ENCODE measurements at regions of chr1 and their contacts with region 1.

Region 1: GRCh38 chr1:212284744-212285684 is at the start of gene PPP2R5A:
- DNase-seq: peak; percentile 100
- H3K4me3 Mint-ChIP-seq: peak within 1 kb of the TSS; percentile 94
- H3K27ac Mint-ChIP-seq: peak within 1 kb of the TSS; percentile 99
- H3K4me1 Mint-ChIP-seq: peaks cover 29% of the 10 kb centered on the region
- H3K27me3 Mint-ChIP-seq: no peaks in the 10 kb centered on the region
- CTCF ChIP-seq: peak; percentile 20
- total RNA-seq, gene PPP2R5A: 37.5 and 38.6 TPM in 2 replicates

Region 2: DNA sequence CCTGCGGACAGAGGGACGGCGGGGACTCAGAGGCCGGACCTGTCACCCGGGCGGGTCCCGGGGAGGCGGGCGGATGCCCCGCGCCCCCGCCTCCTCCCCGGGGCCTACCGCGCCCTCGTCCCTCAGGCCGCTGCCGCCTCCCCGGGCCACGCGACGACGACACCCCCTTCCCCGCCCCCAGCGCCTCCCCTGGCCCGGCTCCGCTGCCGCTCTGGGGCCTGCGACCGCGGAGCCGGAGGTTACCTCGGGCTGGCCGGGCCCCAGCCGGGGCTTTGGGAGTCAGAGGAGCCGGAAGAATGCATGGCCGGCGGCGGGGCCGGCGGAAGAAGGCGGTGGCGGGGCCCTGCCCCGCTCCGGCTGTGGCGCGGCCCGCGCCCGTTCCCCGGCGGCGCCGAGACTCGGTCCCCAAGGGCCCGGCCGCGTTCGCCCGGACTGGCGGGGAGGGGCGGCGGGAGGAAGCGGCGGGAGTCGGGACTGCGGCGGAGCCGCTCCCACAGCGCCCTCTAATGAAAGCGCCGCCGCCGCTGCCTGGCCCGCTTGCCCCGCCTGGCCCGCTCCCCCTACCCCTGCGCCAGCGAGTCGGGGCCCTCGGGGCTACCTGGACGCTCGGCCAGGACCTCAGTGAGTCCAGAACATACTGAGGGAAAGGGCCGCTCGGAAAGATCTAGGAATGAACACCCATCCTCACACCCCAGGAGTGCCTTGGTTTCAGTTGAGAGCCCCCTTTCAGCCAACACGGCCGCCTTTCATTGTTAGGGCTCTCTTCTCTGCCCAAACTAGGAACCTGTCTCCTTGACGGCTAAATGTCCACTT is 454.5 kb before region 1 on chr1 and contains the start of gene LPGAT1:
- CTCF ChIA-PET with region 1: no interaction called
- POLR2A ChIA-PET with region 1: no interaction called
- intact Hi-C with region 1: loop called (anchors 5 kb)
- DNase-seq: peak; percentile 87
- H3K4me3 Mint-ChIP-seq: peak within 1 kb of the TSS; percentile 95
- H3K27ac Mint-ChIP-seq: peak within 1 kb of the TSS; percentile 92
- H3K4me1 Mint-ChIP-seq: peaks cover 33% of the 10 kb centered on the region
- H3K27me3 Mint-ChIP-seq: no peaks in the 10 kb centered on the region
- CTCF ChIP-seq: peak; percentile 91
- total RNA-seq, gene LPGAT1: 76.2 and 82.4 TPM in 2 replicates

Region 3: DNA sequence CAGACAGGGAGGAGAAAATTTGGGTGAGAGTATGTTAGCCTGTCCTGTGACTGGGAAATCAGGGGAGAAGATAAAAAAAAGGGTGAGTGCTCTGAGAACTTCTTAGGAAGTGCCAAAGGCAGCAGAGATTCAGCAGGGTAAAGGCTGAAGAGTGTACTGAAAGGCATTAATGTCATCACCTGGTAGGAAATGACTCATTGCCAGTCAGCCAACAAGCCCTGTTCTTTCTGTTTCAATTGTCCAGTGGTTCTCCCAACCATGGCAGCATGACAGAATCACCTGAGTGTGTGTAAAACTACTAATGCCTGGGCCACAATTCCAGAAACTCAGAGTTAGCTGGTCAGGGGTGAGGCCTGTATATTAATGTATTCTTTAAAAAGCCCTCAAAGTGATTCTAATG is 333.2 kb before region 1 on chr1:
- CTCF ChIA-PET with region 1: no interaction called
- POLR2A ChIA-PET with region 1: no interaction called
- intact Hi-C with region 1: no loop called
- DNase-seq: peak; percentile 98
- H3K4me3 Mint-ChIP-seq: no peak overlapping the region
- H3K27ac Mint-ChIP-seq: no peak overlapping the region
- H3K4me1 Mint-ChIP-seq: peaks cover 17% of the 10 kb centered on the region
- H3K27me3 Mint-ChIP-seq: no peaks in the 10 kb centered on the region
- CTCF ChIP-seq: no peak

Region 4: DNA sequence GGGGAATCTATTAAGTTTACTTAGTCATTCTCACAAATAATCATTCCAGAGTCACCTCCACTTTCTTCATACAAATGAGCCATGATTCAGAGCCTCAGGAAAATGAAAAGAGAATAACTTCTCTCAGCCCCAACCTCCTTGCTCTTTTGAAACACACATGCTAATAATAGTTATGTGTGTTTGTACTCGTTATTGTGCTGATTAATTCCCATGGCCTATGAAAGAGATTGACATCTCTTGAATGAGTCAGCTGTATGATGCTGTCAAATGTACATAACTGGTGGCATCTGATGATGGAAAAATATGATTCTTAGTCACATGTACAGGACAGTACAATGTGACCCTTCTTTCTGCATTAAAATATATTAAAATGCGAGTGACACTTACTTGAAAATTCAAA is 208.0 kb before region 1 on chr1:
- CTCF ChIA-PET with region 1: interaction called, 278 read pairs
- POLR2A ChIA-PET with region 1: interaction called, 74 read pairs
- intact Hi-C with region 1: no loop called
- DNase-seq: peak; percentile 51
- H3K4me3 Mint-ChIP-seq: no peak overlapping the region
- H3K27ac Mint-ChIP-seq: peak overlapping the region; percentile 41
- H3K4me1 Mint-ChIP-seq: peaks cover 13% of the 10 kb centered on the region
- H3K27me3 Mint-ChIP-seq: no peaks in the 10 kb centered on the region
- CTCF ChIP-seq: no peak

Region 5: DNA sequence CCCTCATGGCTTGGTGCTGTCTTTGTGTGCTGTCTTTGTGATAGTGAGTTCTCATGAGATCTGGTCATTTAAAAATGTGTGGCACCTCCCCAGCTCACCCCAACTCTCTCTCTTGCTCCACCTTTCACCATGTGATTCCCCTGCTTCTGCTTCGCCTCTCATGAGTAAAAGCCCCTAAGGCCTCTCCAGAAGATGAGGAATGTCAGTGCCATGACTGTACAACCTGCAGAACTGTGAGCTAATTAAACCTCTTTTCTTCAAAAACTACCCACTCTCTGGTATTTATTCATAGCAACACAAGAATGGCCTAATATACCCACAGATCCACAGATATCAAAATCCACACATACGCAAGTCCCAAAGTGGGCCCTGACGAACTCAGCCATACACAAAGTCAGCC is 88.7 kb before region 1 on chr1:
- CTCF ChIA-PET with region 1: no interaction called
- POLR2A ChIA-PET with region 1: no interaction called
- intact Hi-C with region 1: no loop called
- DNase-seq: no peak
- H3K4me3 Mint-ChIP-seq: no peak overlapping the region
- H3K27ac Mint-ChIP-seq: no peak overlapping the region
- H3K4me1 Mint-ChIP-seq: no peaks in the 10 kb centered on the region
- H3K27me3 Mint-ChIP-seq: no peaks in the 10 kb centered on the region
- CTCF ChIP-seq: no peak

Region 6: GRCh38 chr1:212234431-212235395 is 50.3 kb before region 1 on chr1:
- CTCF ChIA-PET with region 1: interaction called, 6 read pairs
- POLR2A ChIA-PET with region 1: interaction called, 17 read pairs
- intact Hi-C with region 1: loop called (anchors 2 kb)
- DNase-seq: peak; percentile 99
- H3K4me3 Mint-ChIP-seq: no peak overlapping the region
- H3K27ac Mint-ChIP-seq: peak overlapping the region; percentile 44
- H3K4me1 Mint-ChIP-seq: peaks cover 19% of the 10 kb centered on the region
- H3K27me3 Mint-ChIP-seq: no peaks in the 10 kb centered on the region
- CTCF ChIP-seq: no peak

Region 7: GRCh38 chr1:212302745-212303383 is 17.9 kb after region 1 on chr1:
- CTCF ChIA-PET with region 1: interaction called, 3 read pairs
- POLR2A ChIA-PET with region 1: interaction called, 13 read pairs
- intact Hi-C with region 1: no loop called
- DNase-seq: no peak
- H3K4me3 Mint-ChIP-seq: no peak overlapping the region
- H3K27ac Mint-ChIP-seq: no peak overlapping the region
- H3K4me1 Mint-ChIP-seq: peaks cover 7% of the 10 kb centered on the region
- H3K27me3 Mint-ChIP-seq: no peaks in the 10 kb centered on the region
- CTCF ChIP-seq: no peak

Region 8: DNA sequence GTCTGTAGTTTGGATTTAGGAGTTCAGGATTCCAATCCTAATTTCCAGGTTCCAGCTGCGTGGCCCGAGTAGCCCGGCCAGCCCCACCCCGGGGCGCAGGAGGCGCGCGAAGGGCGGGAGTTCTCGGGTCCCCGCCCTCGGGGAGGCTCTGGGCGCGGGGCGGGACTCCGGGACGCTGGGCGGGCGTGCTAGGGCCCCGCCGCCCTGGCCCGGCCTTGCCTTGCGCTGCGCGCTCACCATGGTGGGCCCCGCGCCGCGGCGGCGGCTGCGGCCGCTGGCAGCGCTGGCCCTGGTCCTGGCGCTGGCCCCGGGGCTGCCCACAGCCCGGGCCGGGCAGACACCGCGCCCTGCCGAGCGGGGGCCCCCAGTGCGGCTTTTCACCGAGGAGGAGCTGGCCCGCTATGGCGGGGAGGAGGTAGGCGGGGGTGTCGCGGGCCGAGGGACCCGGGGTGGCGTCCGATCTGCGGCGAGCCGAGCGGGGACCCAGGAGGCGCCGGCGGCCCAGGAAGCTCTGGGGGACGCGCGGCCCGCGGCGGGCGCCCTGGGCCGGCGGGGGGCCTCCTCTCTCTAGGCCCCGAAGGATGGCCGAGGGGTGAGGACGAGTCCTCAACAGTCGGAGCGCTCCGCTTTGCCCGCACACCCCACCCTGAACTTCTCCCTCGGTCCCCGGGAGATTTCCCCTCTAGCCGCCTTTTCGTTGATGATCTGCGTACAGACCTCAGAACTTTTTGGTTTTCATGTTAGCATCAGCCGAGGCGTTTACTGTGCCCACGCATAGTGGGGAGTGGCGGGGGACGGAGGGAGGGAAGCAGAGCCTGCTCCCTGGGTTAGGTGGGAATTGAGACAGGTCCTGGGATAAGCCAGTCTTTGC is 147.9 kb after region 1 on chr1 and contains the start of gene NENF:
- CTCF ChIA-PET with region 1: no interaction called
- POLR2A ChIA-PET with region 1: interaction called, 14 read pairs
- intact Hi-C with region 1: no loop called
- DNase-seq: peak; percentile 96
- H3K4me3 Mint-ChIP-seq: peak within 1 kb of the TSS; percentile 78
- H3K27ac Mint-ChIP-seq: peak within 1 kb of the TSS; percentile 81
- H3K4me1 Mint-ChIP-seq: peaks cover 43% of the 10 kb centered on the region
- H3K27me3 Mint-ChIP-seq: no peaks in the 10 kb centered on the region
- CTCF ChIP-seq: no peak
- total RNA-seq, gene NENF: 110 and 122 TPM in 2 replicates

Region 9: DNA sequence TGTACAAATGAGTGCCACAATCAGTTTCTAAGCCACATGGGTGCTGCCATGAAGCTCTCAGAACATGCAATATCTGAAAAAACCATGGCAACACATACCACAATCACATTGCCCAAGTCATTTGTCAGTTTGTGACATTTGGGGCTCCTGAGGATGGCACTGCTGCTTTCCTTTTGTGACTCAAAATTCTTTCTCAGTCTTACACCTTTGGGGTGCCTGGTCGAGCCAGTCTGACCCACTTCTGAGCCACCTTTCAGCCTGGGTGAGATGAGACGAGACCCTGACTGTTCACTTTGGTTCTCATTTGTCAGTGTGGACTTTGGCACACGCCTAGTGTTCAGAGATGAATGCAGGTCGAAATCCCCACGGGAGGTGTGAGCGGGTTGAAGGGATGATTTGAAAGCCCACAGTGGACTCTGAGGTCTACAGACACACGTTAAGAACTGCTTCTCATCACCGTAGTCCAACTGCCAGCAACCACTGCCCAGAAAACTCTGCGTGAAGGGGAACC is 406.6 kb after region 1 on chr1:
- CTCF ChIA-PET with region 1: no interaction called
- POLR2A ChIA-PET with region 1: no interaction called
- intact Hi-C with region 1: no loop called
- DNase-seq: no peak
- H3K4me3 Mint-ChIP-seq: no peak overlapping the region
- H3K27ac Mint-ChIP-seq: no peak overlapping the region
- H3K4me1 Mint-ChIP-seq: no peaks in the 10 kb centered on the region
- H3K27me3 Mint-ChIP-seq: peaks cover 27% of the 10 kb centered on the region
- CTCF ChIP-seq: no peak

Region 10: GRCh38 chr1:212791676-212792395 is 506.8 kb after region 1 on chr1 and contains the starts of genes NSL1 and TATDN3:
- CTCF ChIA-PET with region 1: no interaction called
- POLR2A ChIA-PET with region 1: interaction called, 5 read pairs
- intact Hi-C with region 1: loop called (anchors 5 kb)
- DNase-seq: peak; percentile 98
- H3K4me3 Mint-ChIP-seq: peak within 1 kb of the TSS; percentile 83
- H3K27ac Mint-ChIP-seq: peak within 1 kb of the TSS; percentile 90
- H3K4me1 Mint-ChIP-seq: peaks cover 19% of the 10 kb centered on the region
- H3K27me3 Mint-ChIP-seq: no peaks in the 10 kb centered on the region
- CTCF ChIP-seq: no peak
- total RNA-seq, gene NSL1: 39.7 and 42.2 TPM in 2 replicates
- total RNA-seq, gene TATDN3: 31.5 and 35.7 TPM in 2 replicates

Measured in MCF 10A (cell line).